ENCODE measurements at regions of chr10 and their contacts with region 1.

Region 1: DNA sequence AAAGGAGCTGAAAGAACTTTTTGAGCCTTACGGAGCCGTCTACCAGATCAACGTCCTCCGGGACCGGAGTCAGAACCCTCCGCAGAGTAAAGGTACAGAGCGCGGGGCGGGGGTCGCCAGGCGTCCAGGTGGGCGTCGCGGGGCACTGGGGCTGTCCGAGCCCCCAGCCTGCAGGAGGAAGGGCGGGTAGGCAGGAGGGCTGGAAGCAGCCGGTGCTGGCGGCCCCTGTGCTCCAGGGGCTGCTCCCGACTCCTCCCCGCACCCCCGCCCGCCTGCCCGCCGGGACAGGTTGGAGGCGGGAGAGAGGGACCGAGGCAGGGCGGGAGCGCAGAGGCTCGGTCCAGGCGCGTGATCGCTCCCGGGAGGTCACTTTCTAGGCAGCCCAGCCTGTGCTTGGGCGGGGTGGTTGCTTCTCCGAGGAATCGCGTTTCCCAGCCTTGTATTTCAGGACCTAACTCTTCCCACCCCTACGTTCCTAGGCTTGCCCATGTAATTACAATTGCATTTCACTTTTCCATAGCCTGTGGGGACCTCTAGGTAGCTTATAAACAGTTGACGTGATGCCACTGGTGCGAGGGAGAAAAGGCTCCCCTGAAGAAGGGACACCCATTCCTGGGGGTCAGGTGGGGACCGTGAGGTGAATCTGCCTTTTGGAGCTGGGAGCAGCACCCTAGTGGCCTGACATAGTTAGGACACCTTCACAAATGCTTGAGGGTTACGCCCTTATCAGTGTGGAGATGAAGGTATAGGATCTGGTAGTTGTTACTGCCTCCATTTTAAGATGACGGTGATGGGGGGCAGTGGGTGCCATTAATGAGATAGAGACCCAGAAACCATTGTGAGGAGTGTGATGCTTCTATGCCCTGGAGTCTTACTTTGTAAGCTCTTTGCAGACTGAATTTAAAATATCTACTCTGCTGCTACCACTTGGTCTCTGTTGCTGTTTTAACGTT is 148.2 kb downstream of the CELF2 start:
- DNase-seq: peak; percentile 57 to 83 (median 72)
- ATAC-seq: peak; percentile 22 to 76 (median 74)
- H3K4me3 ChIP-seq: peak overlapping the region; percentile 22 to 87 (median 70)
- H3K27ac ChIP-seq: peak overlapping the region; percentile 64 to 98 (median 86)
- H3K4me1 ChIP-seq: peaks cover 0 to 70% (median 36%) of the 10 kb centered on the region in 12 donors
- H3K27me3 ChIP-seq: no peaks in the 10 kb centered on the region
- CTCF ChIP-seq: peak in 9 of 12 donors; percentile 22 to 54 (median 34)
- POLR2A ChIP-seq: no peak

Region 2: GRCh38 chr10:11024596-11024995 is 141.3 kb before region 1 on chr10:
- intact Hi-C with region 1: loop called in 1 of 10 experiments (anchors 10 kb)
- DNase-seq: no peak
- ATAC-seq: peak in 3 of 4 donors; percentile 57 to 86 (median 83)
- H3K4me3 ChIP-seq: no peak overlapping the region
- H3K27ac ChIP-seq: peak overlapping the region in 5 of 12 donors; percentile 4 to 61 (median 13)
- H3K4me1 ChIP-seq: peaks cover 0 to 77% (median 26%) of the 10 kb centered on the region in 12 donors
- H3K27me3 ChIP-seq: peaks cover 0 to 11% (median 0%) of the 10 kb centered on the region in 9 donors
- CTCF ChIP-seq: no peak
- POLR2A ChIP-seq: no peak

Region 3: DNA sequence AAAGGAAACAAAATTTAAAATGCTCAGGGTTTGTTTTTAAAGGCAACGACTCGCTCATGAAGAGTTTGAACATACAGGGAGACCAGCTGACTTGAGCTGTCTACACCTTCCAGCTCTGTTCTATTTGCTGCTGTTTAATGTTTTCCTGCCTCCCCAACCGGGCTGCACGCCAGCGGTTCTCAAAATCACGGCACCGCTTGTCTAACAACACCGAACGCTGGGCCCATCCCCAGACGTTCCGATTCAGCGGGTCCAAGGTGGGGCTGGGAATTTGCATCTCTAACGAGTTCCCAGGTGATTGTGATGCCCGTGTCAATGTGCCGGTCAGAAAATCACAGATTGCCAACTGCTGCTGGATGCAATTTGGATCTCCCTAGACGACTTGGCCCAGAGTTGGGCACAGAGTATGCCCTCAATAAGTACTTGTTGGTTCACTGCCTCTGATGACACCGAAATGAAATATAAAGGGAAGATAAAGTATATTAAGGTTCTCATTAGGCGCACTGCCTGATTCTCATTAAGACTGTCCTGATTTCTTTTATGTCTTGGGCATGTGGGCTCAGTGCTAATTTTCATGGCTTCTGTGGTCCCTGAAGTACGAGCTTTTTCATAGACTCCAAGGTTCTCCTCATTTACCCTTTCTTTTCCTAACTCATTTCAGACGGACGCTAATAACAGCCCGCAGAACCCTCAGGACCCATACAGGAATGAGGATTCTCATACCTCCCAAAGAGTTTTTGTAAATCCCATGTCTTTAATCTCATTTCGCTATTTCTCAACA is 119.7 kb before region 1 on chr10:
- intact Hi-C with region 1: loop called in 3 of 10 experiments (anchors 10 kb)
- DNase-seq: peak; percentile 63 to 87 (median 81)
- ATAC-seq: peak; percentile 68 to 82 (median 78)
- H3K4me3 ChIP-seq: peak overlapping the region in 8 of 12 donors; percentile 8 to 41 (median 26)
- H3K27ac ChIP-seq: peak overlapping the region; percentile 55 to 87 (median 79)
- H3K4me1 ChIP-seq: peaks cover 0 to 92% (median 64%) of the 10 kb centered on the region in 12 donors
- H3K27me3 ChIP-seq: no peaks in the 10 kb centered on the region
- CTCF ChIP-seq: no peak
- POLR2A ChIP-seq: no peak

Region 4: DNA sequence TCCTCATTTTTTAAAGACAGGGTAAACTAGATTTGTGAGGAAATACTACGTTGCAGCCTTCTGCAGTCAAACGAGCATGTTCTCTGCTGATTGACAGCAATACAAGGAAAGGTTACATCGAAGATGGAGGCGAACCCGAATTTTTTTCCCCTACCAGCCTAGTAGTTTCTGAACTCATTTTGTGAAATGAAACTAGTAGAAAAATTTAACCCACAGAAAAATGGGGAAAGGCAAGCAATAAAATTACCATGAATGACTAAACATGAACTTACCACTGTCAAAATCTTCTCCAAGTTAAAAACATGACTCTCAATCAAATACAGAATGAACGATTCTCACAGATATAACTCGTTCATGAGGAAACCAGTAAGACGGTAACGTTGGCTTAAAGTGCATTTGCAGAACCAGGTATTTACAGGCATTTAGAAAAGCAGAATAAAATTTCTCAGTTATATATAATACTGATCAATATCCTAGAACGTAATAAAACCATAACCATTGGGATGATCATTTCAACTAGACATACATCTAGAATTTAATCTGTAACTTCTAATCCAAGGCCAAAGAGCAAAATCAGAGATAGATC is 74.3 kb before region 1 on chr10:
- intact Hi-C with region 1: loop called in 1 of 10 experiments (anchors 5 kb)
- DNase-seq: no peak
- ATAC-seq: no peak
- H3K4me3 ChIP-seq: no peak overlapping the region
- H3K27ac ChIP-seq: no peak overlapping the region
- H3K4me1 ChIP-seq: peaks cover 0 to 52% (median 12%) of the 10 kb centered on the region in 12 donors
- H3K27me3 ChIP-seq: no peaks in the 10 kb centered on the region
- CTCF ChIP-seq: no peak
- POLR2A ChIP-seq: no peak

Region 5: GRCh38 chr10:11325817-11326216 is 159.9 kb after region 1 on chr10:
- intact Hi-C with region 1: no loop called
- DNase-seq: no peak
- ATAC-seq: no peak
- H3K4me3 ChIP-seq: no peak overlapping the region
- H3K27ac ChIP-seq: no peak overlapping the region
- H3K4me1 ChIP-seq: peaks cover 7 to 35% (median 27%) of the 10 kb centered on the region in 12 donors
- H3K27me3 ChIP-seq: no peaks in the 10 kb centered on the region
- CTCF ChIP-seq: no peak
- POLR2A ChIP-seq: no peak